ENCODE measurements at regions of chr7 and their contacts with region 1.

Region 1: DNA sequence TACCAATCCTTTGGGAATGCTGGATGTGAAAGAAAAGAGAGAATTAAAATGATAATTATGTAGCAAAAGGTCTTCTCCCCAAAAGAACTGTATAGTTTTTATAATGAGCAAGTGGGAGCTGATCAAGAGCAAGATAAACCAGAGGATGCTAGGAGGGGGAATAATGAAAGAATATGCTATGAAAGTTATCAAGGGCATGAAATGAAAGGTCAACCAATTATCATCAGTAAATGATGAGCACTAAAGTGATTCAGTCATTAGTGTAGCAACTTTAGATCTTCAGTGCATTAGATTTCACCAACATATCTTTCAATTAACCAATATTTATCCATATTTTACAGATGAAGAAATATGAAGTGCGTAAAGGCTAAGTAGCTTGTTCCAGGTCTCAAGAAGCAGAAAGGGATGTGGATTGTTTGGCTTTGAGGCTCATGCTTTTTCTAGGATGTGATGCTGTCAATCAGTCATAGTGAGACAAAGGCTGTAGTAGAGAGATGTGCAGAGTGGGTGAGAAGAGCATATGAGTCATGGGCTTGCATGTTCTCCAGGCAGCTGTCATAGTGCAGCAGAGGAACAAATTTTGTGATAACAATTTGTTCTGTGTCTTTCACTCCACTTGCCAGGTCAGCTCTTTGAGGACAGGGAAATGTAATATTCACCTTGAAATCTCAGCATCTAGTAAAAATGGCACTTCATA is 5.7 kb upstream of the OR2F2 start:
- DNase-seq: no peak
- H3K4me3 Mint-ChIP-seq: no peak overlapping the region
- H3K27ac Mint-ChIP-seq: no peak overlapping the region
- H3K4me1 Mint-ChIP-seq: no peaks in the 10 kb centered on the region
- H3K27me3 Mint-ChIP-seq: peaks cover 13% of the 10 kb centered on the region
- CTCF ChIP-seq: no peak

Region 2: GRCh38 chr7:143882020-143882610 is 47.3 kb before region 1 on chr7:
- CTCF ChIA-PET with region 1: no interaction called
- intact Hi-C with region 1: no loop called
- DNase-seq: no peak
- H3K4me3 Mint-ChIP-seq: peak overlapping the region; percentile 82
- H3K27ac Mint-ChIP-seq: peak overlapping the region; percentile 63
- H3K4me1 Mint-ChIP-seq: peaks cover 10% of the 10 kb centered on the region
- H3K27me3 Mint-ChIP-seq: no peaks in the 10 kb centered on the region
- CTCF ChIP-seq: no peak

Region 3: GRCh38 chr7:143913945-143914615 is 15.3 kb before region 1 on chr7:
- CTCF ChIA-PET with region 1: no interaction called
- intact Hi-C with region 1: loop called (anchors 2 kb)
- DNase-seq: no peak
- H3K4me3 Mint-ChIP-seq: no peak overlapping the region
- H3K27ac Mint-ChIP-seq: no peak overlapping the region
- H3K4me1 Mint-ChIP-seq: no peaks in the 10 kb centered on the region
- H3K27me3 Mint-ChIP-seq: no peaks in the 10 kb centered on the region
- CTCF ChIP-seq: no peak

Region 4: DNA sequence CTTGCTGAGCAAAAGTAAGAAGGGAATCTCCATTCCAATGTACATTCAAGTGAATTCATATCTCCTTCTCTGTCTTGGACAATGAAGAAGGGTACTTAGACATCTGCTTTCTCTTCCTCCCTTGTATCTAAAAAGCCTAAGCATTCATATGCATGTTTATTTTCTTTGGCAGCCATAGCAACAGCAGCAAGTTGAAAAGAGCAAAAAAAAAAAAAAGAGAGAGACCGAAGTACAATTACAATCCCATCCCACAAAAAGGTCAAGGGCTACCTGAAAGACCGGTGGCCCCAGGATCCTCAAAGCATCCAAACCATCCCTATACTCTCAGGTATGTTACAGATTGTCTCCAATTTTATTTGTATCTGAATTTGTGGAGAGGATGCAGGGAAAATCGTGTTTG is 29.4 kb after region 1 on chr7:
- CTCF ChIA-PET with region 1: no interaction called
- intact Hi-C with region 1: loop called (anchors 5 kb)
- DNase-seq: no peak
- H3K4me3 Mint-ChIP-seq: no peak overlapping the region
- H3K27ac Mint-ChIP-seq: no peak overlapping the region
- H3K4me1 Mint-ChIP-seq: no peaks in the 10 kb centered on the region
- H3K27me3 Mint-ChIP-seq: peaks cover 28% of the 10 kb centered on the region
- CTCF ChIP-seq: no peak

Measured in Calu3 (cell line).